Activated B cell treated with CpG ODN at 0.5 μM for 24 hours (primary cell): ENCODE measurements at regions of chr1 and their contacts with region 1.

Region 1: DNA sequence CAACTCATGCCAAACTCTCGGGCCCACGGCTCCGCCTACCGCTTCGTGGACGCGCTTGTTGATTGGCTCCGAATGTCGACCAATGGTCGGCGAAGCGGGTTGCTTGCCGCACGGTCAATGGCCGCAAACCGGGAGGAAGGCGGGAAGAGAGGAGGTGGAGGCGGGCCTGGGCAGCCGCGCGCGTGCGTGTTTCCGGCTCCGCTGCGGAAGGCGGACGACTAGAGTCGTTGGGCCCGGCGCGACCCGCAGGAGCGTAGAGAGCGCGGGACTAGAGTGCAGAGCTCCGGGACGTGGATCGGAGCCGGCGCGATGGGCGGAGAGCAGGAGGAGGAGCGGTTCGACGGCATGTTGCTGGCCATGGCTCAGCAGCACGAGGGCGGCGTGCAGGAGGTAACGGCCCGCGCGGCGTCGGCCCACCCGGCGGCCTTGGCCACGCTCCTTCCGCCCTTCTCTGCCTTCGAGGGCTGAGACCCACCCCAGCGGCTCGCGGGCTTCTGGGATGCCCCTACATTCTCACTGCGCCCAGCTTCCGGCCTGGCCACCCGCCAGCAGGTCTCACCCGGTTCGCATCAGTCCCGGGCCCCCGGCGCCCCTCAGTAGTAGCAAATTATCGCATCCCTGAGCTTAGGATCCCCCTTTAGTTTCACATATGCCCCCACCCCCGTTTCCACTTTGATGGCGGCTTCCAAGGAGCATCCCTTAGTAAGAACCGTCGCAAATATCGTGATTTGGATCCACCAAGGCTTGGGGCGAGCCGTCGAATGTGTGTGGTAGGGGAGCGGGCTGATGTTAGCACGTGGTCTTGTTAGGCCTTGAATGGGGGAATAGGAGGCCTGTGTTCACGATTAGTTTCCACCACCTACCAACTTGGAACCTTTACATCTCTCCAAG is at the start of gene NUDC:
- DNase-seq: peak; percentile 88
- ATAC-seq: peak; percentile 95
- H3K4me3 Mint-ChIP-seq: peak within 1 kb of the TSS; percentile 96
- H3K27ac Mint-ChIP-seq: peak within 1 kb of the TSS; percentile 95
- H3K4me1 Mint-ChIP-seq: peaks cover 31% of the 10 kb centered on the region
- H3K27me3 Mint-ChIP-seq: no peaks in the 10 kb centered on the region
- CTCF ChIP-seq: no peak
- total RNA-seq, gene NUDC: 71.7 and 73.7 TPM in 2 replicates

Region 2: GRCh38 chr1:26889551-26890466 is 32.0 kb before region 1 on chr1 and contains the start of gene GPN2:
- CTCF ChIA-PET with region 1: no interaction called
- POLR2A ChIA-PET with region 1: interaction called, 15 read pairs
- intact Hi-C with region 1: loop called (anchors 1 kb)
- DNase-seq: peak; percentile 74
- ATAC-seq: peak; percentile 95
- H3K4me3 Mint-ChIP-seq: peak within 1 kb of the TSS; percentile 93
- H3K27ac Mint-ChIP-seq: peak within 1 kb of the TSS; percentile 89
- H3K4me1 Mint-ChIP-seq: peaks cover 32% of the 10 kb centered on the region
- H3K27me3 Mint-ChIP-seq: no peaks in the 10 kb centered on the region
- CTCF ChIP-seq: no peak
- total RNA-seq, gene GPN2: 42.6 and 48.6 TPM in 2 replicates

Region 3: DNA sequence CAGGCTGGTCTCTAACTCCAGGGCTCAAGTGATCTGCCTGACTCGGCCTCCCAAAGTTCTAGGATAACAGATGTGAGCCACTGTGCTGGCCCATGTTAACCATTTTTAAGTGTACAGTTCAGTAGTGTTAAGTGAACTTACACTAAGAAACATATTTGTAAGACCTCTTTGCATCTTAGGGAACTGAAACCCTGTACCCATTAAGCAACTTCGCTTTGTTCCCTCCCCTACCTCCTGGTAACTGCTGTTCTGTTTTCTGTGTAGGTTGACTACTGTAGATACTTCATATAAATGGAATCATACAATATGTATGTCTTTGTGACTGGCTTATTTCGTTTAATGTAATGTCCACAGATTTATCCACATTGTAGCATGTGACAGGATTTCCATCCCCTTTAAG is 10.7 kb after region 1 on chr1:
- CTCF ChIA-PET with region 1: no interaction called
- POLR2A ChIA-PET with region 1: interaction called, 10 read pairs
- intact Hi-C with region 1: loop called (anchors 1 kb)
- DNase-seq: no peak
- ATAC-seq: peak; percentile 98
- H3K4me3 Mint-ChIP-seq: peak overlapping the region; percentile 44
- H3K27ac Mint-ChIP-seq: peak overlapping the region; percentile 62
- H3K4me1 Mint-ChIP-seq: peaks cover 13% of the 10 kb centered on the region
- H3K27me3 Mint-ChIP-seq: no peaks in the 10 kb centered on the region
- CTCF ChIP-seq: no peak

Region 4: GRCh38 chr1:26998429-26999300 is 76.9 kb after region 1 on chr1:
- CTCF ChIA-PET with region 1: no interaction called
- POLR2A ChIA-PET with region 1: no interaction called
- intact Hi-C with region 1: loop called (anchors 1 kb)
- DNase-seq: no peak
- ATAC-seq: no peak
- H3K4me3 Mint-ChIP-seq: no peak overlapping the region
- H3K27ac Mint-ChIP-seq: no peak overlapping the region
- H3K4me1 Mint-ChIP-seq: peaks cover 36% of the 10 kb centered on the region
- H3K27me3 Mint-ChIP-seq: peaks cover 16% of the 10 kb centered on the region
- CTCF ChIP-seq: no peak